ENCODE measurements at regions of chr19 and their contacts with region 1.

Region 1: DNA sequence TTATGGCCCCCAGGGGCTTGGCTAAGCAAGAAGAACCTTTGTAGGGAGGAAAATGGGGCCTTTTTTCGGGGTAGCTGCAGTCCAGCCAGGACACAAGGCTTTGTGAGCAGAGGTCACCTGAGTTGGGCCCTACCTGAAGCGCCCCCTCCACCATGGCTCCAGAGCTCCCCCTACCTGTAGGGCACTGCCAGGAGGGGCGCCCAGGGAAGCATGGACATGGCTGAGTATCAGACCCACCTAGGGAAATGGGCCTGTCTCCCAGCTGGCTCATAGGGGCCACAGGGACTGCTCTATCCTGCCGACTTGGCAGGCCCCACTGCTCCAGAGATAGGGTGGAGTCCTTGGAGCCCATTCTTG is 9.0 kb upstream of the CEBPA start:
- DNase-seq: no peak
- H3K4me3 ChIP-seq: no peak overlapping the region
- H3K27ac ChIP-seq: no peak overlapping the region
- H3K4me1 ChIP-seq: no peaks in the 10 kb centered on the region
- H3K27me3 ChIP-seq: no peaks in the 10 kb centered on the region
- CTCF ChIP-seq: peak; percentile 31

Region 2: DNA sequence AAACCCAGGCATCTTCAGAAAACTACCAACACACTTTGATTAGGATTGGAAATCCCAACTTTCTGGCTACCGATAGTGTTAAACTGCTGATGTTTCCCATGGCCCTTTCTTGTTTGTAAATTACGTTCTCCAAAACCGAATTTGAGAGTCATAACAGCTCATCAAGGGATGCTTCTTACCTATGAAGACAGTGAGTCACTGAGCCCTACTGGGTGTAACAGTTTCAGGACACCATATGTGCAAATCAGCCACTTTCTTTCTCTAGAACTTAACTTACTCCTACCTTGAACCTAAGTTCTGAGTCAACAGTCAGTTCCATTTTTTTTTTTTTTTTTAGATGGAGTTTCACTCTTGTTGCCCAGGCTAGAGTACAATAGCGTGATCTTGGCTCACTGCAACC is 1551.9 kb before region 1 on chr19:
- CTCF ChIA-PET with region 1: interaction called, 12 read pairs
- POLR2A ChIA-PET with region 1: no interaction called
- intact Hi-C with region 1: no loop called
- DNase-seq: no peak
- H3K4me3 ChIP-seq: no peak overlapping the region
- H3K27ac ChIP-seq: no peak overlapping the region
- H3K4me1 ChIP-seq: no peaks in the 10 kb centered on the region
- H3K27me3 ChIP-seq: no peaks in the 10 kb centered on the region
- CTCF ChIP-seq: no peak

Region 3: DNA sequence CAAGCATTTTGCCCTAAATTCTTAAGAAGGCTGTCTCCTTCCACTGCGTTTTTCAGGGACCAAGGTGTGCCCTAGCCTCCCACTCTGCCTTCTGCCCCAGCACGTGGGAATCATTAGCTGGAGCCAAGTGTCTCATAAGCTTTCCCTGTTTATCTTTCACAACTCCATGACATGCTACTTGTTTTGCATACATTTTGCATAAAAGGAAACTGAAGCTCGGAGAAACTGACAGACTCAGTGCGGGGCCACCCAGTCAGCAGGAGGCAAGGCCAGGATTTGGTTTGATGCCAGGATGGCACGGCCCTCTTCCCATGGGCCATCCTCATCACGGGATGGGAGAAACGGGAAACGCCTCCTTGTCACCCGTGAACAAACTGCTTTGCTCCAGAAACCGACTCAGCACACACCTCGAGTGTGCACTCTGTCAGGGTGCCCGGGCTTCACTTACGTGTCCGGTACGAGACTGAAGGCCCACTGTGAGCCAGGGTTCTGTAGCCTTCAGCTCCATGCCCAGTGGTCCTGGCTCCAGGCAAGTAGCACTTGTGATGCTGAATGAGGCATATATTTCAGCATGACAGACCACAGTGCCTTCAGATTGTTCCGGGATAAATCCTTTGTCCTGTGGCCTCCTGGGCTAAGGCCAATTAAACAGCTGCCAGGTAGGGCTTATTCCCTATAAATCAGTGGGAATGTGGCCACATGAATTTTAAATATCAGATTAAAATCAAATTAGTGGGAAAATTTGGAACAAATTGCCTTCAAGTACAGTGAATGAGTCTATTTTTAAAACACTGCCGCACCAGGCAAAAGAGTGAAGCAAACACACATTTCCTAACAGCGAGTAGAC is 18.5 kb before region 1 on chr19:
- CTCF ChIA-PET with region 1: no interaction called
- POLR2A ChIA-PET with region 1: no interaction called
- intact Hi-C with region 1: no loop called
- DNase-seq: peak; percentile 29
- H3K4me3 ChIP-seq: no peak overlapping the region
- H3K27ac ChIP-seq: no peak overlapping the region
- H3K4me1 ChIP-seq: peaks cover 17% of the 10 kb centered on the region
- H3K27me3 ChIP-seq: no peaks in the 10 kb centered on the region
- CTCF ChIP-seq: no peak

Measured in A673 (cell line).